HAP-1 (cell line): ENCODE measurements at regions of chrX and their contacts with region 1.

Region 1: GRCh38 chrX:110146521-110146920 is 143.6 kb downstream of the TMEM164 start:
- DNase-seq: peak; percentile 36 to 68
- H3K4me3 ChIP-seq: no peak overlapping the region
- H3K4me1 ChIP-seq: peaks cover 6% of the 10 kb centered on the region
- H3K27me3 ChIP-seq: no peaks in the 10 kb centered on the region

Region 2: DNA sequence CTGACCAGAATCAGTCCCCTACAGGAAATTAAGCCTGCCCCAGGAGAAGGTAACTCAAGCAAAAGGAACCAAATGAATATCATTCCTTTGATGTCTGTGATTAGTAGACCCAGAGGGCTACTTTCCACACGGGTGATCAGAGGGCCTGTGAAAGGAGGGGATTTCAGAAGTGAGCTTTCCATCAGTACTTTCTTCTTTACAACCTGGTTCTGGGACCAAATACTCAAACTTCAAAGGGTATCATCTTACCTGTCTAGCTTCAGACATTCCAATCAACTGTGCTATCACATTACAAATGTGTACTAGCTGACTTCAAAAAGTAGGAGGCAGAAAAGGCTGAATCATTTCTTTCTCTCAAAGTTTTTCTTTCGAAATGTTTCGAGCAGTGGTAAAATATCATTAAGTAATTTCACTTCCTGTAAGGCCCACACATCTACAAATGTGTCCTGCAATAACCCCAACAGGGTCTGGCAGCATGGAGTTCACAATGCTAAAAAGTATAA is 437.3 kb before region 1 on chrX:
- in situ Hi-C with region 1: loop called (anchors 25 kb)
- DNase-seq: no peak
- H3K4me3 ChIP-seq: no peak overlapping the region
- H3K4me1 ChIP-seq: no peaks in the 10 kb centered on the region
- H3K27me3 ChIP-seq: no peaks in the 10 kb centered on the region

Region 3: DNA sequence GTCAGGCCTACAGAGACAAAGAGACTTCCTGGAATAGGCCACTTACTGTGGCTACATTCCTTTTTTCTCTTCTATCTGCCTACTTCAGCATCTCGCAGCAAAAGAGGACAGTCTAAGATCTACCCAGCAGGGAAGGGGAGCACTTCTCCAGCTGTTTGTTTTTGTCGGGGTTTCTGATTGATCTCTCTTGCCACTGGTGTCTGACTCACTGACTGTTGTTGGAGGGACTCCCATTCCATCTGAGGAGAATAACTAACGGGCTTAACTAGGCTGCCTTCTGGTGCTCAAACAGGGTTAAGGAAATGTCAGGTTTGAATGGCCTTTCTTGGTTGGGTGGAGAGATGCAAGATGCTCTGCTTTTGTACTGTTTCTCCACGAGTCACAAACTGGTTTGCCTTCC is 243.9 kb before region 1 on chrX:
- in situ Hi-C with region 1: loop called (anchors 10 kb)
- DNase-seq: no peak
- H3K4me3 ChIP-seq: no peak overlapping the region
- H3K4me1 ChIP-seq: no peaks in the 10 kb centered on the region
- H3K27me3 ChIP-seq: peaks cover 23% of the 10 kb centered on the region

Region 4: DNA sequence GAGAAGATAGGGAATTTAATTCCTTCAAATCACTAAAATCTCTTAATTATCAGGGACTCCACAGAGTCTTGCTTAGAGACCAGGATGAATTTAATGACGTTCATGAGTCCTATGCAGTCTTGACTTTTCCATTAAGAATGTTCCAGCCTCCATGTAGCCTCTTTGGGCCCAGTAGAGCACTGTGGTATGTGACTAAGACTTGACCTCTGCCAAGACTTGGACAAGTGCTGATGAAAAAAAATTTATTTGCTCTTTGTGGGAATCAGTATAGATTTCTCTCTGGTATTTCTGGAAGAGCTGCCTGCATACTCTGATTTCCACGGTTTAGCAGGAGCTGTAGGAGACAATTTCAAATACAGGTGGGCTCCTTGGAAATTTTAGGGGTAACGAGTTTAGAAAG is 608.5 kb after region 1 on chrX:
- in situ Hi-C with region 1: no loop called
- DNase-seq: no peak
- H3K4me3 ChIP-seq: no peak overlapping the region
- H3K4me1 ChIP-seq: no peaks in the 10 kb centered on the region
- H3K27me3 ChIP-seq: no peaks in the 10 kb centered on the region